ENCODE measurements at regions of chr16 and their contacts with region 1.

Region 1: GRCh38 chr16:21656795-21657768 is 4.7 kb upstream of the IGSF6 start:
- DNase-seq: no peak
- ATAC-seq: no peak
- H3K4me3 ChIP-seq: no peak overlapping the region
- H3K27ac ChIP-seq: no peak overlapping the region
- H3K4me1 ChIP-seq: no peaks in the 10 kb centered on the region
- H3K27me3 ChIP-seq: no peaks in the 10 kb centered on the region

Region 2: DNA sequence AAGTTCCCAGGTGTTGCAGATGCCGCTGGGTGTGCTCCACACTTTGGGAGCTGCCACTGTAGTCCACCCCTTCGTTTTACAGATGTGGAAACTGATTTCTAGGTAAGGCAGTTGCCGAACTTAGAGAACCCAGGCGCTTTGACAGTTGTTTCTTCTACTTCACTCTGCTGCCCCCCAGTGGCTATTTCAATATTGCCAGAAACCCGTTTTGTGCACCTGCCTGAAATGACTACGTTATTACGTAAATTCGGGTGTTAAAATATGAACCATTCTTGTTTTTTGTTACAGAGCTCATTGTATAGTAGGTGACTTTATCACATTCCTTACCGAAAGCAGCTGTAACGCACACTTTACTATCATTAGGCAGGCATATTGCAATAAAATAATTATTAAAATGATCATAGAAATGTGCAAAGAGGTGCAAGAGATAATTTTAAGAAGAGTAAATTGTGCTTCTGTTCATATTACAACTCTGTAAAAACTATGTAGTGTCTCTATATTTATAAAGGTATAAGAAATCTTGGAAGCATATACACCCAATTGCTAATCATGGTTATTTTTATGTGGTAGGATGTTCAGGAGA is 51.5 kb after region 1 on chr16:
- intact Hi-C with region 1: loop called in 3 of 4 experiments (anchors 2 to 10 kb)
- DNase-seq: peak; percentile 52 to 84 (median 56)
- ATAC-seq: peak; percentile 31 to 44
- H3K4me3 ChIP-seq: no peak overlapping the region
- H3K27ac ChIP-seq: no peak overlapping the region
- H3K4me1 ChIP-seq: no peaks in the 10 kb centered on the region
- H3K27me3 ChIP-seq: no peaks in the 10 kb centered on the region

Region 3: GRCh38 chr16:21713549-21714368 is 56.7 kb after region 1 on chr16:
- intact Hi-C with region 1: loop called in 3 of 4 experiments (anchors 2 to 10 kb)
- DNase-seq: no peak
- ATAC-seq: no peak
- H3K4me3 ChIP-seq: no peak overlapping the region
- H3K27ac ChIP-seq: no peak overlapping the region
- H3K4me1 ChIP-seq: no peaks in the 10 kb centered on the region
- H3K27me3 ChIP-seq: no peaks in the 10 kb centered on the region